CD8-positive, alpha-beta T cell (primary cell): ENCODE measurements at regions of chr20 and their contacts with region 1.

Region 1: GRCh38 chr20:8205996-8206395 is 73.9 kb downstream of the PLCB1 start:
- DNase-seq: no peak
- ATAC-seq: no peak
- H3K4me3 ChIP-seq: no peak overlapping the region
- H3K4me3 Mint-ChIP-seq: no peak overlapping the region
- H3K27ac ChIP-seq: no peak overlapping the region
- H3K27ac Mint-ChIP-seq: no peak overlapping the region
- H3K4me1 ChIP-seq: no peaks in the 10 kb centered on the region
- H3K4me1 Mint-ChIP-seq: no peaks in the 10 kb centered on the region
- H3K27me3 ChIP-seq: no peaks in the 10 kb centered on the region
- H3K27me3 Mint-ChIP-seq: no peaks in the 10 kb centered on the region
- CTCF ChIP-seq: no peak

Region 2: DNA sequence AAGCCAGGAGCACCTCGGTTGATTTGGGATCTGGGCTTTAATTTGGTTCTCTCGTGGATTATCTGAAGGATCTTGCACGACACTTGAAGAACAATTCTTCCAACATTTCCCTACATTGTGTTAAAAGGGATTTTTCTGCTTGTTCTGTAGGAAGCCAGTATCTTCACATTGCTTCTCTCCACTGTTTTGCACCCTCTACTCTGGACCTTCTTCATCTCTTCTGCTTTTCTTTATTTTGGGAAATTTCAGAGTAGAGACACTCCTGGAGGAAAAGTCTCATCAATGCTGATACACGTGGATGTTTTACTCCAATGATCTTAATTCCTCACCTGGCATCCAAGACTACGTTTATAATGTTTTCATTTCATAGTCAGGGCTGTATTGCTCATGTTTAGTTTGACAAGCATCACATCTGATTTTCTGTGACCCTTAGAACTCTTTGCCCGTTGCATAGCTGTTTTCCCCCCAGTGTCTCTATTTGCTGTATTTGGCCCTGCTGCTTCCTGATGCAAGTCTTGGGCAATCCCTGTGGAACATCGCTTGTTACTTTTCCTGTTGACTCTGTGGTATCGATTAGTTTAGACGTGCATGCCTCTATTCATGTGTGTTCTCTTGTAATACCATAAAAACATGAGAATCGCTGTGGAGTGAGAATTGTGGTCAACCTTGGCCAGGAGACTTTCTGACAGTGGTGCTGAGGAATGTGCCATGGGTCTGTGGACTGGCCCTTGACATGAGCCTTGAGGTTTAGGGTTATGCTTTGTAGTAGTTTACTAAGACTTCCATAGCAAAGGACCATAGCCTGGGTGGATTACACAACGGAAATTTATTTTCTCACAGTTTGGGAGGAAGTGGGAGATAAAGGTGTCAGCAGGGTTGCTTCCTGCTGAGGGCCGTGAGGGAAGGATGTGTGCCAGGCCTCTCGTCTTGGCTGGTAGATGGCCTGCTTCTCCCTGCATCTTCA is 61.4 kb before region 1 on chr20:
- CTCF ChIA-PET with region 1: no interaction called
- POLR2A ChIA-PET with region 1: no interaction called
- intact Hi-C with region 1: no loop called
- DNase-seq: peak in 2 of 9 experiments; percentile 47 to 63
- ATAC-seq: peak; percentile 36
- H3K4me3 ChIP-seq: no peak overlapping the region
- H3K4me3 Mint-ChIP-seq: no peak overlapping the region
- H3K27ac ChIP-seq: peak overlapping the region in 1 of 2 experiments; percentile 38
- H3K27ac Mint-ChIP-seq: peak overlapping the region; percentile 8
- H3K4me1 ChIP-seq: peaks cover 11% of the 10 kb centered on the region
- H3K4me1 Mint-ChIP-seq: peaks cover 20% of the 10 kb centered on the region
- H3K27me3 ChIP-seq: no peaks in the 10 kb centered on the region
- H3K27me3 Mint-ChIP-seq: no peaks in the 10 kb centered on the region
- CTCF ChIP-seq: no peak

Region 3: DNA sequence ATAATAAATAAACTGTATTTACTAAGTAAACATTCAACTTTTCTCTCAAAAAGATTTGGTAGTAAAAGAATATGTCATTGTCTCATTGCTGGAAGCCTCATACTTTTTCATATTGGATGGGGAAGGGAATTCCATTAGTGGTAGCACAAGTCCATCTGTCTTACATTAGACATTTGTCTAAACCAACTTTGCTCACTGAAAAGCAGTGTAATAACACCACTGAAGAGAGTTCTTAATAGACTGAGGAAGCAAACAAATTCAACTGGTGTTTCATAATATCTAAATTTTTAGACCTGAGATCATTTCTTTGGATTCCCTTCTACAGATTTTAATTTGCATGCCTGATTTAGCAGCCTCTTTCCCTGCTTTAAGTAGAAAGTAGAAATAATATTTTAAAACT is 11.3 kb before region 1 on chr20:
- CTCF ChIA-PET with region 1: no interaction called
- POLR2A ChIA-PET with region 1: no interaction called
- intact Hi-C with region 1: loop called in 1 of 2 experiments (anchors 1 kb)
- DNase-seq: no peak
- ATAC-seq: no peak
- H3K4me3 ChIP-seq: no peak overlapping the region
- H3K4me3 Mint-ChIP-seq: no peak overlapping the region
- H3K27ac ChIP-seq: no peak overlapping the region
- H3K27ac Mint-ChIP-seq: no peak overlapping the region
- H3K4me1 ChIP-seq: no peaks in the 10 kb centered on the region
- H3K4me1 Mint-ChIP-seq: no peaks in the 10 kb centered on the region
- H3K27me3 ChIP-seq: no peaks in the 10 kb centered on the region
- H3K27me3 Mint-ChIP-seq: no peaks in the 10 kb centered on the region
- CTCF ChIP-seq: no peak